SK-N-SH (cell line): ENCODE measurements at regions of chr1 and their contacts with region 1.

Region 1: GRCh38 chr1:31182352-31182751 is 57.3 kb downstream of the NKAIN1 start:
- DNase-seq: peak; percentile 39
- H3K4me3 ChIP-seq: no peak overlapping the region
- H3K27ac ChIP-seq: no peak overlapping the region
- H3K4me1 ChIP-seq: no peaks in the 10 kb centered on the region; a peak in 1 of 4 replicates
- H3K27me3 ChIP-seq: no peaks in the 10 kb centered on the region
- CTCF ChIP-seq: no peak
- EP300 ChIP-seq: no peak
- RAD21 ChIP-seq: no peak

Region 2: DNA sequence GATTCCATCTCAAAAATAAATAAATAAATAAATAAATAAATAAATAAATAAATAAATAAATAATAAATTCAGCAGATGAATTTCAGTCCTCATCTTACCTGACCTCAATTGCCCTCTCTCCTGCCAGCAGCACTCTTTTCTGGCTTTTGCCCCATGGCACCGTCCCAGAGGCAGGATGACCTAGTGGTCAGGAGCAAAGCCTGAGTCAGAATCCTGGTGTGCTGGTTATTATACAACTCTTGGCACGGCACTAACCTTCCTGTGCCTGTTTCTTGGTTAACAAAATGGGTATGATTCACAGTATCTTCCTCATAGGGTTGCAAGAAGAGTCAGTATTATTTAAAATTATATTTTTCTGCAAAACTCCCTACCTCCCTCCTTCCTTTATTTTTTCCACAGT is 14.3 kb after region 1 on chr1:
- CTCF ChIA-PET with region 1: interaction called, 211 read pairs
- POLR2A ChIA-PET with region 1: no interaction called
- DNase-seq: no peak
- H3K4me3 ChIP-seq: no peak overlapping the region
- H3K27ac ChIP-seq: no peak overlapping the region
- H3K4me1 ChIP-seq: peaks cover 0 to under 1% of the 10 kb centered on the region in 2 experiments; a peak in 1 of 4 replicates
- H3K27me3 ChIP-seq: no peaks in the 10 kb centered on the region
- CTCF ChIP-seq: no peak
- EP300 ChIP-seq: no peak
- RAD21 ChIP-seq: no peak

Region 3: DNA sequence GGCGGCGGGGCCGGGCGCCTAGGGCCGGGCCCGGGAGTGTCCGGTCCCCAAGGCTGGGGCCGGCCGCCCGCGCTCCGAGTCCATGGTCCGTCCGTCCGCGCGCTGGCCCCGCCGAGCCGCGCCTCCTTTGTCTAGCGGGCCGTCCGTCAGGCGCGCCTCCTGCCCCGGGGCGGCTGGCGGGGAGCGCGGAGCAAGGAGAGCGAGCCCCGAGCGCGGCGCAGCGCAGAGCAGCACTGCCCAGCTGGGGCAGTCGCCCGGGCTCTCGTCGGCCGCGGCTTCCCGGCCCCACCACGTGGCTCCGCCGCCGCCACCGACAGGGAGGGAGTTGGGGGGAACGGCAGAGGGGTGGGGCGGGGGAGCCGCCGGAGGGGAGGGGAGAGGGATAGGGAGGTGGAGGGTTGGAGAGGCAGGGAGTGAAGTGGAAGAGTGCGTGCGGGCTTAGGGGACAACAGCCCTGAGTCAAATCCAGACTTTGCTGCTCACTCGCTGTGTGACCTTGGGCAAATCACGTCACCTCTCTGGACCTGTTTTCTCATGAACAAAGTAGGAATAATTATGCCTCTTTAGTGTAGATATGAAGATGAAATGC is 57.4 kb after region 1 on chr1 and contains the start of gene NKAIN1:
- CTCF ChIA-PET with region 1: interaction called, 65 read pairs
- POLR2A ChIA-PET with region 1: no interaction called
- DNase-seq: peak; percentile 89
- H3K4me3 ChIP-seq: peak within 1 kb of the TSS; percentile 46 to 48
- H3K27ac ChIP-seq: peak within 1 kb of the TSS in 1 of 2 experiments; percentile 44; a peak in 1 of 4 replicates
- H3K4me1 ChIP-seq: peaks cover 0 to 16% of the 10 kb centered on the region in 2 experiments; a peak in 1 of 4 replicates
- H3K27me3 ChIP-seq: peaks cover 34% of the 10 kb centered on the region
- CTCF ChIP-seq: no peak
- EP300 ChIP-seq: no peak
- RAD21 ChIP-seq: no peak
- polyA plus RNA-seq, gene NKAIN1: 0.54 and 0.96 TPM in 2 replicates

Region 4: DNA sequence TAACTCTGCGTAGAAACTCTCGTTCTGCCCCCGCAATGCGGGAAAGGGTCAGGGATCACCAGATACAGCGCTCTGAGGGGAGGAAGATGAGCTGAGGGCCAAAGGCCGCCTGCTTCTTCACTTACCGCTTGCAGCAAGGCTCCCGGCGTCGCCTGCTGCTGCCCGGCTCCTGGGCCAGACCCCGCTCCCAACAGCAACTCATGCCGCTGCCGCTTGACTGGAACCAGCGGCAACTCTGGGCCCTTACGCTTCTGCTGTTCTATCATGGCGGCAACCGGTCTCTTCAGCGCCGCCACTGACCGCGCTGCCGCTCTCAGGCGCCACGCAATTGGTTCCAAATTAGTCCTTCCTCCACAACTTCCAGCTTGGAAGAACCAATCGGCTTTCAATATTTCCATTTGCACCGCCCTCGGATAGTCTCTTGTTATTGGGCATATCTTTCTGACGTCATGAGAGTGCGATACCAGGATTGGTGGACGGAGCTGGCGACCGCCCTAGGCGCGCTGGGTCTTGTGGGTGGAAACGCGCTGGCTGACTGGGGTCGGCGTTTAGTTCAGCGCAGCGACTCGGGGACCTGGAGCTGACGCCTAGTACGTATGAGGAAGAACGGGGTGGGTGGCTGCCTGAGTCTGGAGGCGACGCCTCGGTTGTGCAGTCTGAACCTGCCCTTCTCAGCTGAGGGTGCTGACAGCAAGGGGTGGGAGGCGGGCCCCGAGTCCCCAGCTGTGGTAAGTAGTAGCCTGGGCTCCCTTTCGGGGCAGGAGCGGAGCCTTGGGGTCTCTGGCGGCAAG is 114.3 kb after region 1 on chr1 and contains the starts of genes SNRNP40 and ZCCHC17:
- CTCF ChIA-PET with region 1: interaction called, 30 read pairs
- POLR2A ChIA-PET with region 1: no interaction called
- DNase-seq: peak; percentile 94
- H3K4me3 ChIP-seq: peak within 1 kb of the TSS; percentile 88 to 95
- H3K27ac ChIP-seq: peak within 1 kb of the TSS; percentile 66 to 78
- H3K4me1 ChIP-seq: peaks cover 5 to 16% of the 10 kb centered on the region in 2 experiments; a peak in 2 of 4 replicates
- H3K27me3 ChIP-seq: no peaks in the 10 kb centered on the region
- CTCF ChIP-seq: no peak
- EP300 ChIP-seq: no peak
- RAD21 ChIP-seq: peak; percentile 6; the same call in 1 of the 2 replicates
- polyA plus RNA-seq, gene SNRNP40: 46.7 and 53.3 TPM in 2 replicates
- polyA plus RNA-seq, gene ZCCHC17: 25.8 and 33.8 TPM in 2 replicates

Region 5: DNA sequence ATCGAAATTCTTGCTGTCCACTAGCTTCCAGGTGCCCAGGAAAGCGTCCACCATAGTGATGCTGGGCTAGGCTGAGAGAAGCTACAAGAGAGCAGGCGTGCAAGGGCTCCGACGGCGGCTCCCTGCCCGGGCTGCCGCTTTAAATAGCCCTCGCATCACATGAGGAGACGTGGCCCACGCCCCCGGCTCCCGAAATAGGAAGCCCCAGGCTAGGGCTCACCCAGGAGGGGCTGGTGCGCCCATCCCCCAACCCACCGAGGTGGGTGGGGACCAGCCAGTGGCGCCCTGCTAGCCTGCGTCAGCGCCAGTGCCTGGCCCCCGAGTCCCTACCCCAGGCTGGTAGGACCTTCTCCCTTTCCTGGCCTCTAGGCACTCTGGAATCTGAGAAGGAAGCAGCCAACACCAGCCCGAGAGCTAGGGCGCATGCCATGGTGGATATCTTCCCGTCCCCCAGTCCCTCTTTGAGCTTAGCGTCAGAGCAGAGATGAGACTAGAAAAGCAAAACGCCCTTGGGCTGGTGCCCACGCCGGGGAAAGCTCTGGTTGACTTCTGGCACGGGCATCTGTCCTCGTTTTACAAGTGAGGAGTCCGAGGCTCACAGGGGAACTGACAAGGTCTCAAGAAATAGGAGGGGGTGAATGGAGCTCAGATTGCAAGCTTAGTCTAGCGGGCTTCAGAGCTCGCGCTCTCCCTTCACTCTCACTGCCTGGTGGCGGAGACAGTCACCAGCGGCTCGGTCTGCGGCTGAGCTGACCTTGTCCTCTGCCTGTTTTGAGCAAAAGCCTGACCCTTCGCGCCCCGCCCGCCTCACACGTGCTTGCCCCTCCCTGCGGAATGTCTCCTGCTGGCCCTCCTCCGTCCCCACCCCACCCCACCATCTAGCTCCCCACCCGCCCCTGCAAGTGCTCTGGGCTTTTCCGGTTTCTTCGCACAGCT is 190.9 kb after region 1 on chr1 and contains the start of gene FABP3:
- CTCF ChIA-PET with region 1: interaction called, 88 read pairs
- POLR2A ChIA-PET with region 1: no interaction called
- DNase-seq: peak; percentile 68
- H3K4me3 ChIP-seq: no peak within 1 kb of the TSS
- H3K27ac ChIP-seq: peak within 1 kb of the TSS in 1 of 2 experiments; percentile 7; a peak in 2 of 4 replicates
- H3K4me1 ChIP-seq: peaks cover 0 to 26% of the 10 kb centered on the region in 2 experiments; a peak in 1 of 4 replicates
- H3K27me3 ChIP-seq: no peaks in the 10 kb centered on the region
- CTCF ChIP-seq: no peak
- EP300 ChIP-seq: no peak
- RAD21 ChIP-seq: no peak
- polyA plus RNA-seq, gene FABP3: 0.08 TPM in 1 of 2 replicates, not detected in the other

Region 6: DNA sequence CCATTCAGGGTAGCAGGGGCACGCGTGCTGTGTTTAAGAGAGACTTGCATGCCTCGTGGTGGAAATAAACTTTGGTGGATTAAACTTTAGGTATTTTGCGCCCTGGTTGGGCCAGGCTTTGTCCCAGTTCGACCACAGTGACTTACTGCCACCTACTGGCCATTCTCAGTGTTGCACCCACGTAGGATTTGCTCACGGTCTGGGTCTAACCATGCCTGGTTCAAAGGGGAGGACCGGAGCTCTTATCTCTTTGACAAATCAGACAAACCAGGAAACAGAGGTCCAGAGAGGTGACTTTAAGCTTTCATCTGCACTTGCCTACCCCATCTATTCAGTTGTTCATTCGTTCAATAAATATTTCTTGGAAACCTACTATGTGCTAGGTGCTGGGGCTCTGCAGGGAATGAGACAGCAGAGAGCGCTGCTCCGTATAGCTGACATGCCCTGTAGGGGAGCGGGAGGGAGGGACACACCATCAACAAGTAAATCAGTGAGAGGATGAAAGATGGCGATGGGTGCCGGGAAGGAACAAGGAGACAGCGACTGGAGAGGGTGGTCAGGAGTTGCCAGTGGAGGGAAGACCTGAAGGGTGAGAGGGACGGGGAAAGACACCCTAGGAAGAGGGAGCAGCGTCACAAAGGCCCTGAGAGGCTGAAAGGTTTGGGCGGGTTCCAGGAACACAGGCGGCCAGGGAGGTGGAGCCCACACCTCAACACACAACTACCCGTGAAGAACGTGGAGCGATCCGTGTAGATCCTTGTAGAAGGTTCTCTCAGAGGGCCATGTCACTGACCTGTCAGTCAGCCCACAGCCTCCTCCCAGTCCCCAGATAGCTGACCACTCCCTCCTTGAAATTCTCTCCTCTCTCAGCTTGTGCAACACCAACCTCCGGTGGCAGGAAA is 366.8 kb after region 1 on chr1:
- CTCF ChIA-PET with region 1: interaction called, 35 read pairs
- POLR2A ChIA-PET with region 1: no interaction called
- DNase-seq: peak; percentile 88
- H3K4me3 ChIP-seq: no peak overlapping the region; a peak in 1 of 4 replicates
- H3K27ac ChIP-seq: no peak overlapping the region
- H3K4me1 ChIP-seq: peaks cover 0 to 6% of the 10 kb centered on the region in 2 experiments; a peak in 2 of 4 replicates
- H3K27me3 ChIP-seq: no peaks in the 10 kb centered on the region; the same call in 1 of the 2 replicates
- CTCF ChIP-seq: peak; percentile 93
- EP300 ChIP-seq: no peak; a peak in 1 of 4 replicates
- RAD21 ChIP-seq: peak; percentile 97